Psoas muscle (tissue), 8 donors: ENCODE measurements at regions of chr14 and their contacts with region 1.

Region 1: DNA sequence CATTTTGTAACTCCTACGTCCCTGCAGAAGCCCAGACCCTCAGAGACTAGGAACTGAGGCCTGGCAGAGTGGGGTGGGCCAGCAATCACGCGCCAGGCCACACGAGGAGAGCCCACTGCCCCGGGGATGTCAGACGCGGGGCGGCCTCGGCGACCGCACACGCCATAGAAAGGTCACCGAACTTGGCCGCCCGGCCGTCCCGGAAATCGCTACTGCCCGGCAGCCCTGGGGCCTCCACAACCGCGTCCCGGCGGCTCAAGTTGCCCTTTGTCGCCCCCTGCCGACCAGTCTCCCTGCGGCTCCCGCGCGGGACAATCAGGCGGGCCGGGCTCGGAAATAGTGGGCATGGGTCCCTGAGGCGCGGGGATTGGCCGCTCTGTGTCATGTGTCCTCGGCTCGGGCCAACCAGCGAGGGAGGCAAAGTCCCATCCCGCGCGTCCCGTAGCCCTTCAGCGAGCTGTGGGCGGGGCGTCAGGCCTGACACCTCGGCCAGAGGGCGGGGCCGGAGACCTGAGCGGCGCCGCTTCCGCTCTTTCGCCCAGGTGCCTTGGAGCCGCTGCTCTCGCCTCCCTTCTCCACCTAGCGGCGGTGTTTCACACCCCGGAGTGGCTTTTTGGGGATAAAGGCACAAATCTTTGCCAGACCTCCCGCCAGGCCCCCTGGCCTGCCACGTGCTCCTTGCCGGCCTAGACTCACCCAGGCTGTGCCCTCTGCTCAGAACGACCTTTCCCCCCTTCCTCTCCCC is 33.4 kb upstream of the DEGS2 start:
- DNase-seq: peak; percentile 99 to 100
- ATAC-seq: peak; percentile 99 to 100 (median 99)
- H3K4me3 ChIP-seq: peak overlapping the region; percentile 68
- H3K27ac ChIP-seq: peak overlapping the region; percentile 75
- H3K4me1 ChIP-seq: peaks cover 4% of the 10 kb centered on the region
- H3K27me3 ChIP-seq: no peaks in the 10 kb centered on the region
- CTCF ChIP-seq: peak; percentile 87

Region 2: GRCh38 chr14:99729991-99730868 is 462.6 kb before region 1 on chr14:
- intact Hi-C with region 1: loop called in 1 of 2 experiments (anchors 5 kb)
- DNase-seq: peak; percentile 72 to 84
- ATAC-seq: peak; percentile 76 to 84 (median 82)
- H3K4me3 ChIP-seq: peak overlapping the region; percentile 69
- H3K27ac ChIP-seq: no peak overlapping the region
- H3K4me1 ChIP-seq: peaks cover 23% of the 10 kb centered on the region
- H3K27me3 ChIP-seq: no peaks in the 10 kb centered on the region
- CTCF ChIP-seq: peak; percentile 90